HEK293 (cell line): ENCODE measurements at regions of chr9 and their contacts with region 1.

Region 1: GRCh38 chr9:121399883-121400607 is 30.0 kb upstream of the STOM start:
- H3K4me3 ChIP-seq: no peak overlapping the region
- H3K27ac ChIP-seq: no peak overlapping the region
- H3K4me1 ChIP-seq: no peaks in the 10 kb centered on the region
- CTCF ChIP-seq: no peak

Region 2: GRCh38 chr9:120985810-120986222 is 414.2 kb before region 1 on chr9:
- CTCF ChIA-PET with region 1: interaction called, 13 read pairs
- POLR2A ChIA-PET with region 1: no interaction called
- H3K4me3 ChIP-seq: no peak overlapping the region
- H3K27ac ChIP-seq: no peak overlapping the region
- H3K4me1 ChIP-seq: no peaks in the 10 kb centered on the region
- CTCF ChIP-seq: no peak; the same call in 1 of the 2 replicates

Region 3: DNA sequence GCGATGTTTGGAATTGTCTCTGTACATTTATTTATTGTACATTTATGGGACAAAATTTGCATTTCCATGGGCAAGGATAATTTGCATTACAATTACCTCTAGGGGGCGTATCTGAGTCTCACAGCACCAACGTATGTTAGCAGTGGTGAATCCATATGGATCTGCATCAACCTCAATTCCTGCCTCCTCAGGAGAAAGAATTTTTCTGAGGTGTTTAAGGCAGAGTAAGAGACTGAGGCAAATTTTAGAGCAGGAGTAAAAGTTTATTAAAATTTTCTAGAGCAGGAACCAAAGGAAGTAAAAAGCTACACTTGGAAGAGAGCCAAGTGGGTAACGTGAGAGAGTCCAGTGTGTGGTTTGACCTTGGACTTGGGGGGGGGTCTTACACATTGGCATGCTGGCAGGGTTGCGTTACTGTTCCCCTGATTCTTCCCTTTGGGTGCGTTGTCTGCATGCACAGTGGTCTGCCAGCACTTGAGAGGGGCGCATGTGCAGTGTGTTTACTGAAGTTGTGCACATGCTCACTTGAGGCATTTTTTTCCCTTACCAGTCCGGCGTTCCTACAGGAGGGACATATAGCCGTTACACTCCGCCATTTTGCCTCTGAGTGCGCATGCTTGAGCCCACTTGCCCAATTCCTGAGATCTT is 177.4 kb before region 1 on chr9:
- CTCF ChIA-PET with region 1: interaction called, 19 read pairs
- POLR2A ChIA-PET with region 1: no interaction called
- H3K4me3 ChIP-seq: no peak overlapping the region
- H3K27ac ChIP-seq: no peak overlapping the region
- H3K4me1 ChIP-seq: peaks cover 3% of the 10 kb centered on the region; the same call in 1 of the 2 replicates
- CTCF ChIP-seq: no peak

Region 4: DNA sequence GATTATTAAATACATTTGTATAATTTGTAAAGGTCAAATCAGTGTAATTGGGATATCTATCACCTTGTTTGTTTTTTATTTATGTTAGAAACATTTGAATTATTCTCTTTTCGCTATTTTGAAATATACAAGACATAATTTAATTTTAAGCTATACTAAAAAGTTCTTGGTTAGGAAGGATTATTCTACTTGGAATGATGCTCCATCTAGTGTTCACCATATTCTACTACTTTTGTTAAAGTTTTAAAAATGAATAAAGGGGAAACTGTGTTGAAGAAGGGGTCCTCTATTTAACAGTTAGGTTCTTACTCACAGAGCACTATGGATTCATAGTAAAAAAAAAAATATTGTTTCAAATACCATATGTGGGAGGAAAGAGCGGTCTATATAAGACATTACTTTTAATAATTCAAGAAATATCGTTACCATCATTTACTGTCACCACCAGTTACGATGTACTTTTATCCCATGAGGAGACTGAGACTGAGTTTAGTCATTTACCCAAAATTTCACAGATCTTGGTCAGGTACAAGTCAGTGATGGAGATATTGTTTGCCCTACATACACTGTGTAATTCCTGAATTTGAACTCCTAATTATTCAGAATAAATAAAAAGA is 23.7 kb before region 1 on chr9:
- CTCF ChIA-PET with region 1: interaction called, 26 read pairs
- POLR2A ChIA-PET with region 1: no interaction called
- H3K4me3 ChIP-seq: no peak overlapping the region
- H3K27ac ChIP-seq: no peak overlapping the region
- H3K4me1 ChIP-seq: no peaks in the 10 kb centered on the region
- CTCF ChIP-seq: no peak

Region 5: DNA sequence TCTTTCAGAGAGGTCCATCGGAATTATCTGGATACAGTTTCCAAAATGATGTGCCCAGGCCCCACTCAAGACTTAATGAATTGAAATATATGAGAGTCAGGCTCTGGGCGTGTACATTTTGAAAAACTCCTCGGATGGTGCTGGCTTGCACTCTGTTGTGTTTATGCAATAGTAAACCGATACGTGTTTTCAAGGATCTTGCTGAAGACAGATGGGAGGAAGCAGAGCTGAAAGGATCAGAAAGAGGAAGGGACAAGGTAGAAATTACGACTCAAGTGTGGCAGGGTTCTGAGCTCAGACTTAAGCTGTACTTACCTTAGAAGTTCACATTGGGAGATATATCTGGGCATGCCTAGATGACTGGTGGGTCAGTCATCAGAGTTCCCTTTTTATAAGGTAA is 16.3 kb before region 1 on chr9:
- CTCF ChIA-PET with region 1: interaction called, 26 read pairs
- POLR2A ChIA-PET with region 1: no interaction called
- H3K4me3 ChIP-seq: no peak overlapping the region
- H3K27ac ChIP-seq: no peak overlapping the region
- H3K4me1 ChIP-seq: no peaks in the 10 kb centered on the region
- CTCF ChIP-seq: no peak

Region 6: GRCh38 chr9:121455527-121456239 is 55.6 kb after region 1 on chr9:
- CTCF ChIA-PET with region 1: interaction called, 11 read pairs
- POLR2A ChIA-PET with region 1: no interaction called
- H3K4me3 ChIP-seq: no peak overlapping the region
- H3K27ac ChIP-seq: no peak overlapping the region
- H3K4me1 ChIP-seq: peaks cover under 1% of the 10 kb centered on the region; the same call in 1 of the 2 replicates
- CTCF ChIP-seq: no peak